Heart right ventricle (tissue), 16 donors: ENCODE measurements at regions of chr15 and their contacts with region 1.

Region 1: DNA sequence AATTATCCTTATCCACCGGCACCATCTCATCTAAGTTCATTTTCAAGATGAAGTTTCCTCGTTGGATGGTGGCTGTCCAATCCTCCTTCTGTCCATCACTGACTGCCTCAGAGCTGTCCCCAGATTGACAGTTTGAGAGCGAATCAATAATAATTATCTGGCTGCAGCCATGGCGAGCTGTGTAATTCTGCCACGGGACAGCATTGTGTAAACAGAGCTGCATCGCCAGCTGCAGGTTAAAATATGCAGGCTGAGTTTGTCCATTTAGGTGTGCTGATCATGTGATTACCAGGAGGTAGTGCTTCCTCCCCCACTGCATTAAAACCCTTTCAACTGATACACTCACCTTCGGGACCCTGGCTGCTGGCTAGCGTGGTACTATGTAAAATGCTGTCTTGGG is 461.9 kb upstream of the ONECUT1 start:
- DNase-seq: no peak
- ATAC-seq: no peak
- H3K4me3 ChIP-seq: no peak overlapping the region
- H3K27ac ChIP-seq: no peak overlapping the region
- H3K4me1 ChIP-seq: no peaks in the 10 kb centered on the region
- H3K27me3 ChIP-seq: no peaks in the 10 kb centered on the region
- CTCF ChIP-seq: no peak

Region 2: GRCh38 chr15:53126144-53126543 is 125.9 kb before region 1 on chr15:
- intact Hi-C with region 1: no loop called
- DNase-seq: no peak
- ATAC-seq: no peak
- H3K4me3 ChIP-seq: no peak overlapping the region
- H3K27ac ChIP-seq: no peak overlapping the region
- H3K4me1 ChIP-seq: no peaks in the 10 kb centered on the region
- H3K27me3 ChIP-seq: no peaks in the 10 kb centered on the region
- CTCF ChIP-seq: no peak

Region 3: GRCh38 chr15:53233801-53234200 is 18.2 kb before region 1 on chr15:
- intact Hi-C with region 1: loop called in 1 of 10 experiments (anchors 1 kb)
- DNase-seq: no peak
- ATAC-seq: no peak
- H3K4me3 ChIP-seq: no peak overlapping the region
- H3K27ac ChIP-seq: no peak overlapping the region
- H3K4me1 ChIP-seq: no peaks in the 10 kb centered on the region
- H3K27me3 ChIP-seq: no peaks in the 10 kb centered on the region
- CTCF ChIP-seq: no peak